CD8-positive, alpha-beta T cell (primary cell): ENCODE measurements at regions of chr14 and their contacts with region 1.

Region 1: DNA sequence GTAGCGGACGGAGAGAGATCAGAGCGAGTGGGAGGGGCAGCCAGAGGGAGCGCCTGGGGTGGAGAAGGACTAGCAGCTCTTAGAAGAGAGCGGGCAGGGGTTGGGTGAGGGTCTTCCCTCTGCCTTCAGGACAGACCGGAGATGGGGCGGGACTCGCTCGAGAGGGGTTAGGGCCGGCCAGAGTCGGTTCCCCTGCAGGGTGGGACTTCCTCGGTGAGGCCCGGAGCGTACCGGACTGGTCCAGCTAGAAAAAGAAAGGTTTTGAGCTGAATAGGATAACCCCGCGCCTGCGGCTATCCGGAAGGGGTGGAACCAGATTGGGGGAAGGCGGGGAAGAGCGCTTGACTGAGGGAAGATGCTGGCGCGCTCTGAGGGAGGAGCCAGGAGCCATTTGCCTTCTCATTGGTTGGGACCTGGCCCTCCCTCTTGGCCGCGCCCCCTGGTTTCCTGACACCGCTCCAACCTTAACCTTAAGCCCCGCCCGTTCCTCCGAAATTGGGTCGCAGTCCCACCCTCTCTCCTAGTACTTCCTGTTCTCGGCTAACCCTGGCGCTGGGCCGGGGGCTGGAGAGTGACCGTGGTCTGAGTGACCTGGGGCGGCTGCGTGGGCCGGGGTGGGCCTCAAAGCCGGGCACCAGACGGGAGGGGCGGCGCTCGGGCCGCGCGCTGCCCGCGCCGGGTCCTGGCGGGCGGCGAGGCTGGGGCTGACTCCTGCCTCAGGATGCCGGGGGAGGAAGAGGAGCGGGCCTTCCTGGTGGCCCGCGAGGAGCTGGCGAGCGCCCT is at the start of gene RNF31:
- DNase-seq: peak; percentile 93 to 99 (median 97)
- ATAC-seq: peak; percentile 89
- H3K4me3 ChIP-seq: peak within 1 kb of the TSS; percentile 96 to 99
- H3K4me3 Mint-ChIP-seq: peak within 1 kb of the TSS; percentile 95
- H3K27ac ChIP-seq: peak within 1 kb of the TSS; percentile 79 to 91
- H3K27ac Mint-ChIP-seq: peak within 1 kb of the TSS; percentile 93
- H3K4me1 ChIP-seq: peaks cover 34% of the 10 kb centered on the region
- H3K4me1 Mint-ChIP-seq: peaks cover 53% of the 10 kb centered on the region
- H3K27me3 ChIP-seq: no peaks in the 10 kb centered on the region
- H3K27me3 Mint-ChIP-seq: no peaks in the 10 kb centered on the region
- CTCF ChIP-seq: no peak
- total RNA-seq, gene RNF31: 45.4 to 51.7 TPM

Region 2: DNA sequence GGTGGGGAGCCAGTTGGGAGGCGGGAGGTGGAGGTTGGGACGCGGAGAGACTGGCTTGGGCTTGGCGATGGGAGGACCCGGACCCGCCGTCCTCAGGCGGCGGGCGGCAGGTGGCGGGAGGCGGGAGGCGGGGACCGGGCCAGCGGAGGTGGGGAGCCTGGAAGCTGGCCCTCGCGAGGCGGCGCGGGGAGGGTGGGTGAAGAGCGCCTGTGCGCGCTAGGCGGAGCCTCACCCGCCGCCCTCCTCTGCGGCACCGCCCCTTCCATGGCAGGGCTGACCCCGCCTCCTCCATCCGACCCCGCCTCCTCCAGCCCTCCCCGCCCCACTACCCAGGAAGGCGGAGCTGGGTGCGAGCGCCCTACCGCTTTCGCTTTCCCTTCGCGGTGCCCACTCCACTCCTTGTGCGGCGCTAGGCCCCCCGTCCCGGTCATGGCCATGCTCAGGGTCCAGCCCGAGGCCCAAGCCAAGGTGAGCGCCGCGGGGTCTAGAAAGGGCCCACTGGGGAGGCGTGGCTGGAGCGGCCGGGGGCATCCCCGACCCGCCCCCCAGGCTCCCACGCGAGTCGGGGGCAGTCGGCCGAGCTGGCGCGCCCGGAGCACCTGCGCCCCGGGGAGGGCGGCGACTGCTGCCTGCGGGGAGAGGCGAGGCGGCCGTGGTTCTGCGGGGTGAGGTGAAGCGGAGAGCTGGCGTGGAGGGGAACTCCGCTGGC is 11.2 kb before region 1 on chr14 and contains the start of gene PSME1:
- CTCF ChIA-PET with region 1: interaction called, 14 read pairs
- POLR2A ChIA-PET with region 1: interaction called, 34 read pairs
- intact Hi-C with region 1: loop called (anchors 1 kb)
- DNase-seq: peak; percentile 89 to 97 (median 94)
- ATAC-seq: peak; percentile 98
- H3K4me3 ChIP-seq: peak within 1 kb of the TSS; percentile 78 to 91
- H3K4me3 Mint-ChIP-seq: peak within 1 kb of the TSS; percentile 90
- H3K27ac ChIP-seq: peak within 1 kb of the TSS; percentile 81 to 83
- H3K27ac Mint-ChIP-seq: peak within 1 kb of the TSS; percentile 93
- H3K4me1 ChIP-seq: peaks cover 54% of the 10 kb centered on the region
- H3K4me1 Mint-ChIP-seq: peaks cover 65% of the 10 kb centered on the region
- H3K27me3 ChIP-seq: no peaks in the 10 kb centered on the region
- H3K27me3 Mint-ChIP-seq: no peaks in the 10 kb centered on the region
- CTCF ChIP-seq: no peak
- total RNA-seq, gene PSME1: 200 to 207 TPM

Region 3: DNA sequence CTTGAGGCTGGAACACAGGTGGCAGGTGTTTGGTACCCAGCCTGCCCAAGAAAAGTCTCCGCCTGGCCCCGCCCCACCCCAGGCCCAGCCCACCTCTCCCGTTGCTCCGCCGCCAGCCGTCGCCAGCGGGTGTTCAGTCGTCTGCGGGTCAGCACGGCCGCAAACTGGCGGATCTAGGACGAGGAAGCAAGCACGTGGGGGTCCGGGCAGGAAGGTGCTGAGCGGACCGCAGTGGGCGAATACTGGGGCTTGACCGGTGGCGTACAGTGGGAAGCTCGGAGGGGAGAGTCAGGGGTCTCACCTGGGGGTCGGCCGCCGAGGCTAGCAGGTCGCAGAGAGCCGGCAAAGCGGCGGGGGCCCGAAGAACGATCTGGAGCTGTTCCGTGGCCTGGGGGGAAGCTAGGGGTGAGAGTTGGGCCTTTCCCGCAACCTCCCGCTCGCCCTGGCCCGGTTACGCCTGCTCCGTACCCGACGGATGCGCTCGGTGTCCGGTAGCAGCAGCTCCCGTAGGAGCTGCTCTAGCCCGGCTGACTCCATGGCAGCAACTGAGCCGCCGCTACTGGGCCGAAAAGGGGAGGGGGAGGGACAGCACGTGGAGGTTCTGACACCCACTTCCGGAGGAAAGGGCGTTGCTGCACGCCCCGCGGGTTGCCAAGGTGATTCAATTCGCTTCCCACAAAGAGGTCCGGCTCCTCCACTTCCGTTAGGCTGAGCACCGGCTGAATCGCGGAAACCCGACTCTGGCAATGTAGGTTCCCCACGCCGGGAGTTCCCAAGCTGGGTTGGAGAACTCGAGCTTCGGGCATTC is 41.3 kb after region 1 on chr14 and contains the start of gene IPO4:
- CTCF ChIA-PET with region 1: interaction called, 3 read pairs
- POLR2A ChIA-PET with region 1: interaction called, 7 read pairs
- intact Hi-C with region 1: loop called (anchors 1 to 2 kb)
- DNase-seq: peak; percentile 86 to 99 (median 94)
- ATAC-seq: peak; percentile 91
- H3K4me3 ChIP-seq: peak within 1 kb of the TSS; percentile 77 to 82
- H3K4me3 Mint-ChIP-seq: peak within 1 kb of the TSS; percentile 89
- H3K27ac ChIP-seq: peak within 1 kb of the TSS; percentile 61 to 89
- H3K27ac Mint-ChIP-seq: peak within 1 kb of the TSS; percentile 87
- H3K4me1 ChIP-seq: peaks cover 17% of the 10 kb centered on the region
- H3K4me1 Mint-ChIP-seq: peaks cover 38% of the 10 kb centered on the region
- H3K27me3 ChIP-seq: no peaks in the 10 kb centered on the region
- H3K27me3 Mint-ChIP-seq: no peaks in the 10 kb centered on the region
- CTCF ChIP-seq: no peak
- total RNA-seq, gene IPO4: 69.2 to 75.6 TPM

Region 4: GRCh38 chr14:24195191-24196070 is 48.3 kb after region 1 on chr14 and contains the start of gene TM9SF1:
- CTCF ChIA-PET with region 1: interaction called, 3 read pairs
- POLR2A ChIA-PET with region 1: interaction called, 18 read pairs
- intact Hi-C with region 1: no loop called
- DNase-seq: peak; percentile 81 to 96 (median 91)
- ATAC-seq: peak; percentile 83
- H3K4me3 ChIP-seq: peak within 1 kb of the TSS; percentile 87 to 94
- H3K4me3 Mint-ChIP-seq: peak within 1 kb of the TSS; percentile 94
- H3K27ac ChIP-seq: peak within 1 kb of the TSS; percentile 99 to 100
- H3K27ac Mint-ChIP-seq: peak within 1 kb of the TSS; percentile 98
- H3K4me1 ChIP-seq: peaks cover 31% of the 10 kb centered on the region
- H3K4me1 Mint-ChIP-seq: peaks cover 50% of the 10 kb centered on the region
- H3K27me3 ChIP-seq: no peaks in the 10 kb centered on the region
- H3K27me3 Mint-ChIP-seq: no peaks in the 10 kb centered on the region
- CTCF ChIP-seq: no peak
- total RNA-seq, gene TM9SF1: 17.5 to 20.4 TPM

Region 5: GRCh38 chr14:24411443-24412389 is 264.5 kb after region 1 on chr14:
- CTCF ChIA-PET with region 1: no interaction called
- POLR2A ChIA-PET with region 1: no interaction called
- intact Hi-C with region 1: no loop called
- DNase-seq: peak in 3 of 9 experiments; percentile 35 to 59 (median 51)
- ATAC-seq: peak; percentile 59
- H3K4me3 ChIP-seq: no peak overlapping the region
- H3K4me3 Mint-ChIP-seq: no peak overlapping the region
- H3K27ac ChIP-seq: no peak overlapping the region
- H3K27ac Mint-ChIP-seq: no peak overlapping the region
- H3K4me1 ChIP-seq: no peaks in the 10 kb centered on the region
- H3K4me1 Mint-ChIP-seq: no peaks in the 10 kb centered on the region
- H3K27me3 ChIP-seq: no peaks in the 10 kb centered on the region
- H3K27me3 Mint-ChIP-seq: peaks cover 5% of the 10 kb centered on the region
- CTCF ChIP-seq: peak; percentile 50

Region 6: DNA sequence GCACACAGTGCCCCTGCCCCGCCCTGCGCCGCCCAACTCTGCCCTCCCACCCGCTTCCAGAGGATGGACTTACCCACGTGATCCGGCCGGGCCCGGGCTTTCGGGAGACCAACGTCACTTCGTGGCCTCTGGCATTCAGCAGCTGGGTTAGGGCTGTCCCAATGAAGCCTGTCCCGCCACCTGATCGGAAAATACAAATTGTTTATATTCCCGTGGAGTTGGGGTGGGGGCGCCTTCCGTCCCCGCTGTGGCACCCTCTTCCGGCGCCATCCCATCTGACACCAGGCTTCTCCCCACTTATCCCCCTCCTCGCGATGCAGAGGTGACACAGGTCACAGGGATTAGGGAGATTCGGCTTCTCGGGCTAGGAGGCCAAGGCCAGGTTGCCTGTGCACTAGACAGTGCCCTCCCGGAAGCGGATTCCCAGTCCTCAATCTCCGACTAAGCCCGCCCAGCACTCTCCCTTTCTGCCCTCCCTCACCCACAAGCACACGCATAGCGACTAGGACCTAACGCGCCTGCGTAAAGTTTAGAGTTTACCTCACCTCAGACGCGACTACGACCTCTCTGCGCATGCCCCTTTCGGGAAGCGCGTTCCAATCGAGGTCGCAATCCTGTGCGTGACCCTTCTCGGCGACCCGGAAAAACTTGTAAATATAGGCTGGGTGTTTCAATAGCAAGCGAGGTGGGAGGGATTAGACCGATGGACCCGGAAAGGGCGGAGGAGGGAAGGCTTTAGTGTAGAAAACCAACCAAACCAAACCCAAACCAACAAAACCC is 295.3 kb after region 1 on chr14 and contains the start of gene SDR39U1:
- CTCF ChIA-PET with region 1: no interaction called
- POLR2A ChIA-PET with region 1: no interaction called
- intact Hi-C with region 1: loop called in 1 of 2 experiments (anchors 1 kb)
- DNase-seq: peak; percentile 93 to 100 (median 95)
- ATAC-seq: peak; percentile 89
- H3K4me3 ChIP-seq: peak within 1 kb of the TSS; percentile 77 to 89
- H3K4me3 Mint-ChIP-seq: peak within 1 kb of the TSS; percentile 95
- H3K27ac ChIP-seq: peak within 1 kb of the TSS; percentile 96
- H3K27ac Mint-ChIP-seq: peak within 1 kb of the TSS; percentile 97
- H3K4me1 ChIP-seq: peaks cover 35% of the 10 kb centered on the region
- H3K4me1 Mint-ChIP-seq: peaks cover 45% of the 10 kb centered on the region
- H3K27me3 ChIP-seq: no peaks in the 10 kb centered on the region
- H3K27me3 Mint-ChIP-seq: no peaks in the 10 kb centered on the region
- CTCF ChIP-seq: no peak
- total RNA-seq, gene SDR39U1: 75.0 to 84.4 TPM